Dorsolateral prefrontal cortex (tissue), 120 donors: ENCODE measurements at regions of chr7 and their contacts with region 1.

Region 1: GRCh38 chr7:44921607-44922359 is 36.5 kb upstream of the PURB start:
- DNase-seq: peak; percentile 84 to 97 (median 92)
- H3K4me3 ChIP-seq: no peak overlapping the region
- H3K27ac ChIP-seq: no peak overlapping the region
- H3K27me3 ChIP-seq: peaks cover 0 to 2% (median 0%) of the 10 kb centered on the region in 45 donors
- CTCF ChIP-seq: peak; percentile 58 to 96 (median 90)

Region 2: DNA sequence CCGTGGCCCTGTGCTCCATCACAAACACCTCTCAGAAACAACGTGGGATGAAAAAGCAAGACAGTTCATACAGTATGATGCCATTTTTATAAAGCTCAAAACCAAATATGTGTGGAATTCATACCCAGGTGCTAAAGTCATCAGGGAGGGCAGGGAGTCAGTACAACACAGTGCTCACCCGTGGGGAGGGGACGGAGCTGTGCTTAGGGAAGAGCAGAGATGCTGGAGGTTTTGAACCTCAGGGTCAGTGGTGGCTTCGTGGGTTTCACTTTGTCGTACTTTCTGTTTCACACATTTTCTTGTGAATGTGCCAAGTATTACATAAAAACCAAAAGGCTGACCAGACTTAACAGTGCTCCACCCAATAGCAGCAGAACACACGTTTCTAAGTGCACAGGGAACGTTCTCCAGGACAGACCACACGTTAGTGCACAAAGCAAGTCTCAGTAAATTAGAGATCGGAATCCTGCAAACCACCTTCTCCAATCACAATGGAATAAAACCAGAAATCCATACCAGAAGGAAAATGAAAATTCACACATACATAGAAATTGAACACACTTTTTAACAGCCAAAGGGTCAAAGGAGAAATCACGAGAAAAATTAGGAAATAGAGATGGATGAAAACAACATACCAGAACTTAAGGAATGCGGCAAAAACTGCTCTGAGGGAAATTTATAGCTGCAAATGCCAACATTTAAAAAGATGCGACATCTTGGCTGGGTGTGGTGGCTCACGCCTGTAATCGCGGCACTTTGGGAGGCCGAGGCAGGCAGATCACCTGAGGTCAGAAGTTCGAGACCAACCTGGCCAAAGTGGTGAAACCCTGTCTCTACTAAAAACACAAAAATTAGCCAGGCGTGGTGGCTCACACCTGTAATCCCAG is 151.8 kb before region 1 on chr7:
- intact Hi-C with region 1: loop called in 1 of 2 experiments (anchors 10 kb)
- DNase-seq: no peak
- H3K4me3 ChIP-seq: peak overlapping the region in 2 of 59 donors; percentile 5 to 6
- H3K27ac ChIP-seq: peak overlapping the region; percentile 78 to 99 (median 95)
- H3K27me3 ChIP-seq: no peaks in the 10 kb centered on the region
- CTCF ChIP-seq: no peak

Region 3: GRCh38 chr7:44858161-44858560 is 63.6 kb before region 1 on chr7:
- intact Hi-C with region 1: loop called (anchors 1 kb)
- DNase-seq: no peak
- H3K4me3 ChIP-seq: no peak overlapping the region
- H3K27ac ChIP-seq: no peak overlapping the region
- H3K27me3 ChIP-seq: no peaks in the 10 kb centered on the region
- CTCF ChIP-seq: peak in 37 of 56 donors; percentile 10 to 56 (median 32)

Region 4: GRCh38 chr7:44875241-44875640 is 46.5 kb before region 1 on chr7:
- intact Hi-C with region 1: no loop called
- DNase-seq: no peak
- H3K4me3 ChIP-seq: no peak overlapping the region
- H3K27ac ChIP-seq: no peak overlapping the region
- H3K27me3 ChIP-seq: no peaks in the 10 kb centered on the region
- CTCF ChIP-seq: no peak